Dendritic cell treated with granulocyte-macrophage colony-stimulating factor and Interleukin-4, amounts not matched to agents 40 ng/mL and 50 ng/mL, for 4 days (primary cell): ENCODE measurements at regions of chr2 and their contacts with region 1.

Region 1: GRCh38 chr2:227774011-227774624 is 28.4 kb downstream of the SCYGR8 start:
- H3K4me3 Mint-ChIP-seq: no peak overlapping the region
- H3K27ac Mint-ChIP-seq: no peak overlapping the region
- H3K4me1 Mint-ChIP-seq: peaks cover 5% of the 10 kb centered on the region
- H3K27me3 Mint-ChIP-seq: peaks cover 1% of the 10 kb centered on the region

Region 2: GRCh38 chr2:227862227-227862740 is 88.2 kb after region 1 on chr2:
- intact Hi-C with region 1: loop called (anchors 1 kb)
- H3K4me3 Mint-ChIP-seq: no peak overlapping the region
- H3K27ac Mint-ChIP-seq: no peak overlapping the region
- H3K4me1 Mint-ChIP-seq: no peaks in the 10 kb centered on the region
- H3K27me3 Mint-ChIP-seq: peaks cover 11% of the 10 kb centered on the region